Activated CD4-positive, alpha-beta T cell treated with anti-CD3 and anti-CD28 coated beads, Interleukin-2, amount 10 ng/mL, durations not matched to agents 24 days and 14 days (primary cell): ENCODE measurements at regions of chr1 and their contacts with region 1.

Region 1: DNA sequence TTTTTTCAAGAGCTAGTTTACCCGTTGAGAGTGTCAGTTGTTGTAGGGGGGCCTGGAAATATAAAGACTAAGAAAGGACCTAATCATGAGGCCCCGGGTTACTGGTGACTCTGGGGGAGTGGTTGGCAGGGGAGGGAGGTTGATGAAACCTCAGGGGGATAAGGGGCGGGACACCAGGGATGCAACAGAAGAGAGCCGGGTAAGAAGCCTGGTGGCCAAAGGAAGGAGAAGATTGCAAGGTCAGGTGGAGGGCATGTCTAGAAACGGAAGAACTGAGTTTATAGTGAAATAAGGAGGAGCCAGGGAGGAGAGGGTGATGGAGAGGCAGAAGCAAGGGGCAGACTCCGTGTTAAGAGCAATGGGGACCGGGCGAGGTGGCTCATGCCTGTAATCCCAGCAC is 12.5 kb upstream of the SPOCD1 start:
- DNase-seq: no peak
- H3K4me3 Mint-ChIP-seq: peak overlapping the region; percentile 36
- H3K27ac Mint-ChIP-seq: peak overlapping the region; percentile 15
- H3K4me1 Mint-ChIP-seq: peaks cover 25% of the 10 kb centered on the region
- H3K27me3 Mint-ChIP-seq: no peaks in the 10 kb centered on the region

Region 2: GRCh38 chr1:31760471-31761470 is 67.6 kb before region 1 on chr1:
- intact Hi-C with region 1: no loop called
- DNase-seq: peak; percentile 90
- H3K4me3 Mint-ChIP-seq: peak overlapping the region; percentile 61
- H3K27ac Mint-ChIP-seq: no peak overlapping the region
- H3K4me1 Mint-ChIP-seq: peaks cover 18% of the 10 kb centered on the region
- H3K27me3 Mint-ChIP-seq: peaks cover 56% of the 10 kb centered on the region

Region 3: DNA sequence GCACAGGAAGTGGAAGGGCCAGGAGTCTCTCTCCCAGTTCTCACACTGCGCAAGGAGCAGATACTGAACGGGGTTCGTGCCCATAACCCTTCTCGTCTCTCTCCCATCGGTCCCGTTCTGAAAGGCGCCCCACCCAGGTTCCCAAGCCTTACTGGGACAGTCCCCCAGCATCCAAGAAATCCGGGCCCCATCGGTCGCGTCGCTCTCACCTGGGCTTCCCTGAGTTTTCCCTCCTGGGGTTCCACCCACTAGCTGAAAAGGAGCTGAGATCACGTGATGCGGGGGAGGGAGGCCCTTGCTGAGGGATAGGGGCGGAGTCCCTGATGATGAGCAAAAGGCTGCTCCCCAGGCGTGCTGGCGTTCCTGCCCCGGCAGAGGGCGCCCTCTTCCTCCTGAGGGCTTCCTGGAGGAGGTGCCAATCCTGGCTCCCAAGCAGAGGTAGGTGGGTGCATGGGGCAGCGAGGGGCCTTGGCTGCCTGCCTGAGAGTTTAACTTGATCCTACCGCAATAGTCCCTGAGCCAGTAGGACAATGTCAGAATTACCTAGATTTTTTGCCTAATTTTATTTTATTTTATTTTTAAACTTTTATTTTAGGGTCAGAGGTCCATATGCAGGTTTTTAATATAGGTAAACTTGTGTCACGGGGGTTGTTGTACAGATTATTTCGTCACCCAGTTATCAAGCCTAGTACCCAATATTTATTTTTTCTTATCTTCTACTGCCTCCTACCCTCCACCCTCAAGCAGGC is 12.4 kb before region 1 on chr1 and contains the start of gene SPOCD1:
- intact Hi-C with region 1: no loop called
- DNase-seq: peak; percentile 94
- H3K4me3 Mint-ChIP-seq: no peak within 1 kb of the TSS
- H3K27ac Mint-ChIP-seq: no peak within 1 kb of the TSS
- H3K4me1 Mint-ChIP-seq: peaks cover 6% of the 10 kb centered on the region
- H3K27me3 Mint-ChIP-seq: peaks cover 2% of the 10 kb centered on the region
- total RNA-seq, gene SPOCD1: not detected in 2 replicates

Region 4: DNA sequence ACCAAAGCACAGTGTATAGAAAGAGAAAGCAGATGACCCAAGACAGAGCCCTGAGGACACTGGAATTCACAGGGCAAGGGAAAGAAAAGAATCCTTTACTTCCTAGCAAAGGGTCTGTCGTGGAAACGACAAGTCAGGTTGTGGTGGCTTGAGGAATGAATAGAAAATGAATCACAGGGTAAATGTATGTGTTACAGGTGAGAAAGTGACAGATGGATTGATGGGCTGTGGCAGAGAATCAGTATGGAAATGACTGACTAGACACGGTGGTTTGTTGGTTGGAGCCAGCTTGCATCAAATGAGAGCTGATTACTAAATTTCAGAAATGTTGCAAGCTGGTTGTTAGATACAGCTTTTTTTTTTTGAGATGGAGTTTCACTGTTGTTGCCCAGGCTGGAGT is 62.9 kb after region 1 on chr1:
- intact Hi-C with region 1: loop called (anchors 5 kb)
- DNase-seq: peak; percentile 71
- H3K4me3 Mint-ChIP-seq: peak overlapping the region; percentile 7
- H3K27ac Mint-ChIP-seq: peak overlapping the region; percentile 75
- H3K4me1 Mint-ChIP-seq: peaks cover 23% of the 10 kb centered on the region
- H3K27me3 Mint-ChIP-seq: no peaks in the 10 kb centered on the region